ENCODE measurements at regions of chr16 and their contacts with region 1.

Region 1: GRCh38 chr16:57628008-57628781 is at the start of gene ADGRG1:
- DNase-seq: peak; percentile 24
- H3K4me3 Mint-ChIP-seq: peak within 1 kb of the TSS; percentile 62
- H3K27ac Mint-ChIP-seq: peak within 1 kb of the TSS; percentile 68
- H3K4me1 Mint-ChIP-seq: peaks cover 12% of the 10 kb centered on the region
- H3K27me3 Mint-ChIP-seq: peaks cover 30% of the 10 kb centered on the region
- total RNA-seq, gene ADGRG1: 1.8 and 1.9 TPM in 2 replicates

Region 2: GRCh38 chr16:57600048-57600835 is 28.0 kb before region 1 on chr16:
- intact Hi-C with region 1: loop called (anchors 1 kb)
- DNase-seq: no peak
- H3K4me3 Mint-ChIP-seq: no peak overlapping the region
- H3K27ac Mint-ChIP-seq: no peak overlapping the region
- H3K4me1 Mint-ChIP-seq: peaks cover 49% of the 10 kb centered on the region
- H3K27me3 Mint-ChIP-seq: peaks cover 7% of the 10 kb centered on the region

Measured in activated T-helper 2 cell treated with anti-CD3 and anti-CD28 coated beads, Interferon-gamma antibody, Interleukin-2, Interleukin-4, amounts not matched to agents 10 μg/mL and 5 μg/mL and 100 μg/mL, durations not matched to agents 14 hours and 24 hours and 36 hours (primary cell).